ENCODE measurements at regions of chr20 and their contacts with region 1.

Region 1: GRCh38 chr20:1466211-1467081 is at the start of gene NSFL1C:
- DNase-seq: peak; percentile 98
- H3K4me3 ChIP-seq: peak within 1 kb of the TSS; percentile 81 to 97
- H3K27ac ChIP-seq: peak within 1 kb of the TSS; percentile 76 to 79
- H3K4me1 ChIP-seq: peaks cover 15 to 16% of the 10 kb centered on the region in 2 experiments; a peak in 1 of 4 replicates
- H3K27me3 ChIP-seq: no peaks in the 10 kb centered on the region
- CTCF ChIP-seq: peak; percentile 72
- EP300 ChIP-seq: peak; percentile 22 to 23; a peak in 1 of 4 replicates
- RAD21 ChIP-seq: peak; percentile 32; the same call in 1 of the 2 replicates
- polyA plus RNA-seq, gene NSFL1C: 30.6 and 45.9 TPM in 2 replicates

Region 2: DNA sequence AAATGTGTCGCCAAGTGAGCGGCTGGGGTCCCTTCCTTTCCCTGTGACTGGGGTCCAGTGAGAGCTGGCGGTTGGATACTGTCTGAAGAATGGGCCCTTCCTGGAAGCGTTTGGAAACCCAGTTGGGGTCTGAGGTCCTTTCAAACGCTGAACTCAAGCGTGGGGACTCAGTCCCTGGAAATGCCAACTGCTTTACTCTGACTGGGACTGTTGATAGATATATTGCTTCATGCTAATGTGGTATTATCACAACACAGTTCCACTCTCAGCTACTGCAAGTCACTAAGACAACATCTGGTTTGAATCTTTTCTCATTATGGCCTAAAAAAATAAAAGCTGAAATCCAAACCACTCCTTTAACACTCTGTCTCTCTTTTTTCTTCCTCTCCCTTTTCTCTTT is 371.7 kb before region 1 on chr20:
- CTCF ChIA-PET with region 1: no interaction called
- POLR2A ChIA-PET with region 1: no interaction called
- DNase-seq: peak; percentile 42
- H3K4me3 ChIP-seq: no peak overlapping the region
- H3K27ac ChIP-seq: peak overlapping the region in 1 of 2 experiments; percentile 40; a peak in 2 of 4 replicates
- H3K4me1 ChIP-seq: peaks cover 0 to 10% of the 10 kb centered on the region in 2 experiments; a peak in 2 of 4 replicates
- H3K27me3 ChIP-seq: no peaks in the 10 kb centered on the region
- CTCF ChIP-seq: no peak
- EP300 ChIP-seq: no peak; a peak in 1 of 4 replicates
- RAD21 ChIP-seq: no peak

Region 3: GRCh38 chr20:1299522-1299921 is 166.9 kb before region 1 on chr20:
- CTCF ChIA-PET with region 1: interaction called, 11 read pairs
- POLR2A ChIA-PET with region 1: no interaction called
- DNase-seq: peak; percentile 67
- H3K4me3 ChIP-seq: no peak overlapping the region
- H3K27ac ChIP-seq: no peak overlapping the region
- H3K4me1 ChIP-seq: peaks cover 0 to 4% of the 10 kb centered on the region in 2 experiments; a peak in 1 of 4 replicates
- H3K27me3 ChIP-seq: no peaks in the 10 kb centered on the region
- CTCF ChIP-seq: peak; percentile 25; the same call in 1 of the 2 replicates
- EP300 ChIP-seq: no peak
- RAD21 ChIP-seq: no peak

Region 4: DNA sequence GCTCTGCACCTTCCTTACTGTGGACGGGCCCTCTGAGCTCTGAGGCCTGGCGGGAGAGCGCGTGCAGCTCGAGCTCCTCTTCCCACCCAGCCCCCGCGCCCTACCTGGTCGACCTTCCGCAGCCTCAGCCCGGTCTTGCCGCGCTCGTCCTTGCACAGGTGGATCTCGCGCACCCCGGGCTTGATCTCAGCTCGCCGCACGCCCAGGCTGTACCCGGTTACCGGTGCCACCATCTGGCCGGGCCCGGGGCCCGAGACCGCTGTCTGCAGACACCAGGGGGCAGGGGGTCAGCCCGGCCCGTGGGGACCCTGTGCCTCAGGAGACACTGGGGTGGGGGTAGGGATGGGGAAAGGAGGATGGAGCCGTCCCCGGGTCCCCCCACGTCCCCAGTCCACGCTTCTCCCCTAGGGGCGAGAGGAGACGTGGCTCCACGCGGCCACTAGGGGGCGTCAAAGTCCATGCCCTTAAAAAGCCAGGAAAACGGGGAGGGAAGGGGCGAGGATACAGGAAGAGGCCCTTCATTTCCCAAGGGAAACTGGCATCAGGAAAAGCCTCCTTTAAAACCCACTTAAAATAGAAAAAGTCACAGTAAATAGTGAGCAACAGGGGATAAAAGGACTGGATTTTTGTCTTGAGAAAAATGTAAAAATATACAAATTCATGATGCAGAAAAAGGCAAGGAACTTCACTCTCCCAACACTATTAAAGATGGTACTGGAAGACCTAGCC is 153.0 kb before region 1 on chr20:
- CTCF ChIA-PET with region 1: interaction called, 11 read pairs
- POLR2A ChIA-PET with region 1: no interaction called
- DNase-seq: peak; percentile 93
- H3K4me3 ChIP-seq: peak overlapping the region in 1 of 2 experiments; percentile 45; a peak in 1 of 4 replicates
- H3K27ac ChIP-seq: no peak overlapping the region
- H3K4me1 ChIP-seq: no peaks in the 10 kb centered on the region
- H3K27me3 ChIP-seq: no peaks in the 10 kb centered on the region
- CTCF ChIP-seq: peak; percentile 90
- EP300 ChIP-seq: no peak
- RAD21 ChIP-seq: peak; percentile 88

Region 5: GRCh38 chr20:1357921-1358671 is 108.3 kb before region 1 on chr20:
- CTCF ChIA-PET with region 1: no interaction called
- POLR2A ChIA-PET with region 1: no interaction called
- DNase-seq: no peak
- H3K4me3 ChIP-seq: no peak overlapping the region
- H3K27ac ChIP-seq: no peak overlapping the region
- H3K4me1 ChIP-seq: no peaks in the 10 kb centered on the region; a peak in 1 of 4 replicates
- H3K27me3 ChIP-seq: no peaks in the 10 kb centered on the region
- CTCF ChIP-seq: no peak
- EP300 ChIP-seq: no peak
- RAD21 ChIP-seq: no peak

Region 6: GRCh38 chr20:1450926-1451491 is 15.4 kb before region 1 on chr20:
- CTCF ChIA-PET with region 1: interaction called, 23 read pairs
- POLR2A ChIA-PET with region 1: no interaction called
- DNase-seq: no peak
- H3K4me3 ChIP-seq: peak overlapping the region in 1 of 2 experiments; percentile 25; a peak in 1 of 4 replicates
- H3K27ac ChIP-seq: no peak overlapping the region
- H3K4me1 ChIP-seq: no peaks in the 10 kb centered on the region
- H3K27me3 ChIP-seq: no peaks in the 10 kb centered on the region
- CTCF ChIP-seq: no peak
- EP300 ChIP-seq: no peak
- RAD21 ChIP-seq: no peak

Region 7: DNA sequence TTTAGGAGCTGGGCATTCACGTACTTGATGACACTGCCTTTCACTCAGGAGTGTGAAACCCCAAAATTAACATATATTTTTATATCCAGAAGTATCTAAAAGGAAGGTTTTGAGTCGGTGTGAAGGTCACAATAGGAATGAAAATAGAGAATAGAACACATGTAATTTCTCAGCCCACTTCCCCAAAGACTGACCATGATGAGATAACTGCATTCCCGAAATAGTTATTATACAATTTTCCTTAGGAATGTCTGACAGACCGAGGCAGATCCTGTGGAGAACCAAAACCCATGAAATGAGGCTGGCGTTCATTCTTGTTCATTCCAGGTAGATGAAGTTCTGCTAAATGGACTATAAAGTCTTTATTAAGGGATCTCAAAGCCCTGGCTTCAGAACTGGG is 10.1 kb before region 1 on chr20:
- CTCF ChIA-PET with region 1: interaction called, 23 read pairs
- POLR2A ChIA-PET with region 1: no interaction called
- DNase-seq: no peak
- H3K4me3 ChIP-seq: no peak overlapping the region
- H3K27ac ChIP-seq: no peak overlapping the region
- H3K4me1 ChIP-seq: no peaks in the 10 kb centered on the region
- H3K27me3 ChIP-seq: no peaks in the 10 kb centered on the region
- CTCF ChIP-seq: no peak
- EP300 ChIP-seq: no peak
- RAD21 ChIP-seq: no peak

Region 8: DNA sequence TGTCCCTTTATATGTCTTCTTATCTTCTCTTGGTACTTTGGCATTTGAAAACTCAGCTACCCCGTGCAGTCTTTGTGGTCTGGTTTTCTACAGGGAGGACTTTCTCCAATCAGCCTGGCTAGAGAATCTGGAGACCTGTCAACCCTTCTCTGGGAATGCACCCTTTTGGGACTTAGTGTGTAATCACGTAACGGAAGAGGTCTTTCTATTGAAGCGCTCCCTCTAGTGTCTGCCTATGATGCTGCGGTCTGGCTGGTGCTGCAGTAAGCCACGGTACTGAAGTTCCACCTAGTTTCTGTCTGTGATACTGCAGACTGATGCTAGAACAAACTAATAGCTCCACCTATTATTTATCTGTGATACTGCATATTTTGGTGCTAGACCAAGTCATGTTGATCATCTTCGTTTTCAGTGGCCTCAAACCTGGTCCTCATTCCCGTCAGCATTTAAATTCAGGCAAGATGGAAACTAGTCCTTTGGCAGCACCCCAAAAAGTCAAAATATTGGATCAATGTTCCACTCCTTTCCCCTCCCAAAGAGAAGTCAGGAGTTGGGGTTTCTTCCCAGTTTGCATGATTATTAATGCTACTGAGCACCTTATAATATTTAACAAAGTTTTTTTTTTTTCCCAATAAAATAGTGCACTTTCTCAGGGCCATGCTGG is 37.2 kb after region 1 on chr20:
- CTCF ChIA-PET with region 1: interaction called, 31 read pairs
- POLR2A ChIA-PET with region 1: no interaction called
- DNase-seq: peak; percentile 67
- H3K4me3 ChIP-seq: peak overlapping the region in 1 of 2 experiments; percentile 32; a peak in 1 of 4 replicates
- H3K27ac ChIP-seq: no peak overlapping the region
- H3K4me1 ChIP-seq: no peaks in the 10 kb centered on the region
- H3K27me3 ChIP-seq: peaks cover 13% of the 10 kb centered on the region; the same call in 1 of the 2 replicates
- CTCF ChIP-seq: peak; percentile 97
- EP300 ChIP-seq: no peak
- RAD21 ChIP-seq: peak; percentile 76